Testis (tissue), 5 donors: ENCODE measurements at regions of chr15 and their contacts with region 1.

Region 1: DNA sequence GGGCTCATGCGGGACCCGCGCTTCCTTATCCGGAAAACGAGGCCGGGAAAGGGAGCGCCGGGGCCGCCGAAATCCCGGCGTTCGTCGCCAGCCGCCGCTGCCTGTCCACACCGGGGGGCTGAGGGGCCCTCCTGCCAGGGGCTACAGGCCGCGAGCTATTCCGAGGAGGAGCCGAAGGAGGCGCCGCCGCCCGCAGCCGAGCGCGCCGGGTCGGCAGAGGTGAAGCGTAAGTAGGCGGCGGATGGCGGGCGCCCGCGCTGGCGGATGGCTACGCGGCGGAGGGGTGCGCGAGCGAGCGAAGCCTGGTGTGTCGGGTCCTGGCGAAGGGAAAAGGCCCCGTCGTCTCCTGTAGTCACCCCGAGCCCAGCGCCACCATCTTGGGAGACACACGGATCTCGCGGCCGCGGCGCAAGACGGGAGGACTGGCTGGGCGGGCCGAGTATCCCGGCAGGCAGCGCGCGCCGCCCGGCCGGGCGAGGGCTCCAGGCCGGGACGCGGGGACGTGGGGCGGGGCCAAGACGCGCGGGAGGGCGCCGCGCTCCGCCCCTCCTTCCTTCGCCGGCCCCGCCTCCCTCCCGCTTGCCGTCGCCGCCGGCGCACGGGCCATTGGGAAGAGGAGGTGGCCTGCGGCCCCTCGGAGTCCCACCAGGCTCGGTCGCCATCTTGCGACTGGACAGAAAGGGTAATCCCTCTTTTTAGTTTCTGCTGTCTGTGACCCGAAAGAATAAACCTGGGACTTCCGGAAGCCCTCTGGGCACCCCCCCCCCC is at the start of gene UBE3A:
- DNase-seq: peak; percentile 92
- H3K4me3 ChIP-seq: peak within 1 kb of the TSS; percentile 97 to 99
- H3K27ac ChIP-seq: peak within 1 kb of the TSS; percentile 98 to 99
- H3K4me1 ChIP-seq: peaks cover 7% of the 10 kb centered on the region
- H3K27me3 ChIP-seq: no peaks in the 10 kb centered on the region
- CTCF ChIP-seq: peak in 1 of 3 experiments; percentile 60
- POLR2A ChIP-seq: peak; percentile 35
- total RNA-seq, gene UBE3A: 86.5 to 103 TPM

Region 2: DNA sequence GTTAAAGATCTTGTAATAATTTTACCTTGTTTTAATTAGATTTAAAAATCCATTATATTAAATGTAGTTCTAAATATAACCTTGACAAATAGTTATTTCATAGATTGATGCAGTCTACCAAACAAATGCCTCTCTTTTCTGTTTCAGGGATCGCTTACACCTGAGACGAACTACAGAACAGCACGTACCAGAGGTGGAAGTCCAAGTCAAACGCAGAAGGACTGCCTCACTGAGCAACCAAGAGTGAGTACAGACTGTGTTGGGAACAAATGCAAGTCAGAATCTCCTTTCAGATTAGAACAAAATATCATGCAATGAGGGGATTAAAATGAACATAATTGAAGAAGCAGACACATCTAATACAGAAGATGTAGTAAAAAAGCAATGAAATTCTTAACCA is 476.8 kb before region 1 on chr15:
- intact Hi-C with region 1: loop called (anchors 5 kb)
- DNase-seq: no peak
- H3K4me3 ChIP-seq: no peak overlapping the region
- H3K27ac ChIP-seq: no peak overlapping the region
- H3K4me1 ChIP-seq: no peaks in the 10 kb centered on the region
- H3K27me3 ChIP-seq: no peaks in the 10 kb centered on the region
- CTCF ChIP-seq: no peak
- POLR2A ChIP-seq: no peak